ENCODE measurements at regions of chr15 and their contacts with region 1.

Region 1: DNA sequence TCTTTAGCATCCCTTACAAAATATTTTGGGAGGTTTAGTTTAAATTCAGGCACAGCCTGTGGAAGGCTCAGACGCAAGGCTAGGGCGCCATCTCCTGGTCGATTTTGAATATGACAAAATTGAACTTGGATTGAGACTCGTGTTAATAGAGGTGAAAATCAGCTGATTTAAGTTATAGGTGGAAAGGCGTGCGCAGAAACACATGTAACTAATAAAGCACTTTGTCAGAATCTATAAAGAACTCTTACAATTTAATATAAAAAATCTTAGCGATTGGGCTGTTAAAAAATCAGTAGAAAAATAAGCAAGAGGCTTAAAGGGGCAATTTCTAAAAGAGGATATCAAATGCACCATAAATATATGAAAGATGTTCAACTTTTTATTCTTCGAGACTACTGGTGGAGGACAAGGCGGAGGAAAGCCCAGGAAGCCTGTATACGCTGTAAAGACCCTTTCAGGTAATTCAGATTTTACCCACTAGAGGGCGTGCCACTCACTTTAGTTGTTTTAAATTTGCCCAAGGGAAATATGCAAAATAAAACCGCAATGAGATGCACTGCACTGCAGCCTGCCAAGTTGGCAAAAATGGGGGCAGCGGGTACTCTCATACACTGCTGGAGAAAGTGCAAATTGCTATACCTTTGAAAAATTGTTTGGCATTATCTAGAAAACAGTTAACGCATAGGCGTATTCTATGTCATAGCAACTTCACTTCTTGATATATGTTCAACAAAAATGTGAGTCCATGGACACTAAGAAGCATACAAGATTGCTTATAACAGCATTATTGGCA is 64.7 kb downstream of the SLC30A4 start:
- DNase-seq: peak; percentile 35 to 92 (median 63)
- ATAC-seq: peak; percentile 68 to 81 (median 70)
- H3K4me3 ChIP-seq: peak overlapping the region; percentile 41 to 78
- H3K4me3 Mint-ChIP-seq: peak overlapping the region; percentile 78 to 90 (median 88)
- H3K27ac ChIP-seq: peak overlapping the region; percentile 63
- H3K27ac Mint-ChIP-seq: peak overlapping the region; percentile 85 to 94
- H3K4me1 ChIP-seq: peaks cover 16 to 40% of the 10 kb centered on the region in 2 experiments
- H3K4me1 Mint-ChIP-seq: peaks cover 40 to 48% (median 41%) of the 10 kb centered on the region in 3 donors
- H3K27me3 ChIP-seq: no peaks in the 10 kb centered on the region
- H3K27me3 Mint-ChIP-seq: no peaks in the 10 kb centered on the region

Region 2: GRCh38 chr15:45338417-45338816 is 119.4 kb before region 1 on chr15:
- CTCF ChIA-PET with region 1: interaction called in 1 of 2 experiments, 10 read pairs
- POLR2A ChIA-PET with region 1: no interaction called
- DNase-seq: peak in 8 of 35 experiments; percentile 0 to 24 (median 2)
- ATAC-seq: peak in 3 of 4 experiments; percentile 48 to 70 (median 64)
- H3K4me3 ChIP-seq: no peak overlapping the region
- H3K4me3 Mint-ChIP-seq: no peak overlapping the region
- H3K27ac ChIP-seq: no peak overlapping the region
- H3K27ac Mint-ChIP-seq: peak overlapping the region in 1 of 2 donors; percentile 25
- H3K4me1 ChIP-seq: peaks cover 0 to 3% of the 10 kb centered on the region in 2 experiments
- H3K4me1 Mint-ChIP-seq: peaks cover 7 to 12% (median 8%) of the 10 kb centered on the region in 3 donors
- H3K27me3 ChIP-seq: peaks cover 0 to 4% of the 10 kb centered on the region in 2 experiments
- H3K27me3 Mint-ChIP-seq: peaks cover 4 to 8% of the 10 kb centered on the region in 2 donors

Region 3: GRCh38 chr15:45414215-45414885 is 43.5 kb before region 1 on chr15:
- CTCF ChIA-PET with region 1: interaction called, 4 to 10 read pairs
- POLR2A ChIA-PET with region 1: no interaction called
- DNase-seq: no peak
- ATAC-seq: peak in 1 of 4 experiments; percentile 43
- H3K4me3 ChIP-seq: no peak overlapping the region
- H3K4me3 Mint-ChIP-seq: peak overlapping the region in 1 of 3 donors; percentile 4
- H3K27ac ChIP-seq: no peak overlapping the region
- H3K27ac Mint-ChIP-seq: peak overlapping the region; percentile 47 to 71
- H3K4me1 ChIP-seq: peaks cover 4 to 8% of the 10 kb centered on the region in 2 experiments
- H3K4me1 Mint-ChIP-seq: peaks cover 18 to 22% (median 20%) of the 10 kb centered on the region in 3 donors
- H3K27me3 ChIP-seq: no peaks in the 10 kb centered on the region
- H3K27me3 Mint-ChIP-seq: no peaks in the 10 kb centered on the region

Region 4: GRCh38 chr15:45429974-45430792 is 27.7 kb before region 1 on chr15:
- CTCF ChIA-PET with region 1: interaction called, 11 to 27 read pairs
- POLR2A ChIA-PET with region 1: no interaction called
- DNase-seq: peak; percentile 48 to 92 (median 80)
- ATAC-seq: peak; percentile 93 to 96 (median 94)
- H3K4me3 ChIP-seq: peak overlapping the region; percentile 29 to 71
- H3K4me3 Mint-ChIP-seq: peak overlapping the region; percentile 13 to 56 (median 49)
- H3K27ac ChIP-seq: no peak overlapping the region
- H3K27ac Mint-ChIP-seq: no peak overlapping the region
- H3K4me1 ChIP-seq: peaks cover 0 to 11% of the 10 kb centered on the region in 2 experiments
- H3K4me1 Mint-ChIP-seq: peaks cover 0 to 5% (median 2%) of the 10 kb centered on the region in 3 donors
- H3K27me3 ChIP-seq: peaks cover 0 to 8% of the 10 kb centered on the region in 2 experiments
- H3K27me3 Mint-ChIP-seq: peaks cover 3 to 8% of the 10 kb centered on the region in 2 donors

Region 5: DNA sequence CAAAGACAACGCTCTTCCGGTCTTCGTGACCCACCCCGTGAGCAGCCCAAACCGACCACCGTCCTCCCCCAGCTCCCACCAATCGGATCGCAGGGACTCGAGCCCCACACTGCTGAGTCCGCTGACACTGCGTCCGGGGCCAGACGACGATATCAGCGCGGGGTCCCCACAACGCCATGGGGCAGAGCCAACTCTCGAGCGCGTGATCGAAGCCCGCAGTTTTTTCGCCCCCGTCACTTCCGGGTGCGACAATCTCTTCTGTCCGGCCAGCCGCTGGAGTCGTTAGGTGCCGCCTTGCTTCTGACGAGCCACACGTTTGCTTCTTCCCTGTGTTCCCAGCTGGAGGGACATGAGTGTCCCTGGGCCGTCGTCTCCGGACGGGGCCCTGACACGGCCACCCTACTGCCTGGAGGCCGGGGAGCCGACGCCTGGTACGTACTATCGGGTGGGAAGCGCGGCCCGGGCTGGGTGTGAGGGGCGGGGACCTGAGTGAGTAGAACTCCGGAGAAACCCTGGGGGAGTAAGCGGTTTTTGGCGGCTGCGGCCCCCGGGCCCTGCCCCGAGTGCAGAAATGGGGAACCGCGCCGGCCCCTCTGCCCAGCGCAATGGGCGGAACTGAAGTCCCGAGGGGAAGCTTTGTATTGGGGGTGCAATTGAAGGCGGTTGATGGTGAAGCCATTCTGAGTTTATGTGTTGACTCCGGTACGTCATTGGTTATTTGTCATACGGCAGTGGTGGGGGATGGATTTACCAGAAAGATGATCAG is 129.4 kb after region 1 on chr15 and contains the start of gene BLOC1S6:
- CTCF ChIA-PET with region 1: interaction called in 1 of 2 experiments, 16 read pairs
- POLR2A ChIA-PET with region 1: interaction called in 1 of 2 experiments, 3 read pairs
- DNase-seq: peak; percentile 77 to 94 (median 86)
- ATAC-seq: peak; percentile 78 to 86 (median 81)
- H3K4me3 ChIP-seq: peak within 1 kb of the TSS; percentile 78 to 89
- H3K4me3 Mint-ChIP-seq: peak within 1 kb of the TSS; percentile 96 to 100 (median 100)
- H3K27ac ChIP-seq: peak within 1 kb of the TSS; percentile 97
- H3K27ac Mint-ChIP-seq: peak within 1 kb of the TSS; percentile 100
- H3K4me1 ChIP-seq: peaks cover 21 to 27% of the 10 kb centered on the region in 2 experiments
- H3K4me1 Mint-ChIP-seq: peaks cover 36 to 51% (median 50%) of the 10 kb centered on the region in 3 donors
- H3K27me3 ChIP-seq: no peaks in the 10 kb centered on the region
- H3K27me3 Mint-ChIP-seq: no peaks in the 10 kb centered on the region
- total RNA-seq, gene BLOC1S6: 37.5 to 59.5 (median 40.5) TPM

Region 6: GRCh38 chr15:45611305-45611704 is 153.5 kb after region 1 on chr15:
- CTCF ChIA-PET with region 1: interaction called, 9 to 17 read pairs
- POLR2A ChIA-PET with region 1: no interaction called
- DNase-seq: peak in 1 of 35 experiments; percentile 37
- ATAC-seq: no peak
- H3K4me3 ChIP-seq: no peak overlapping the region
- H3K4me3 Mint-ChIP-seq: no peak overlapping the region
- H3K27ac ChIP-seq: no peak overlapping the region
- H3K27ac Mint-ChIP-seq: no peak overlapping the region
- H3K4me1 ChIP-seq: no peaks in the 10 kb centered on the region
- H3K4me1 Mint-ChIP-seq: no peaks in the 10 kb centered on the region
- H3K27me3 ChIP-seq: no peaks in the 10 kb centered on the region
- H3K27me3 Mint-ChIP-seq: no peaks in the 10 kb centered on the region

Measured in T-cell (primary cell).